SK-N-SH (cell line): ENCODE measurements at regions of chr16 and their contacts with region 1.

Region 1: DNA sequence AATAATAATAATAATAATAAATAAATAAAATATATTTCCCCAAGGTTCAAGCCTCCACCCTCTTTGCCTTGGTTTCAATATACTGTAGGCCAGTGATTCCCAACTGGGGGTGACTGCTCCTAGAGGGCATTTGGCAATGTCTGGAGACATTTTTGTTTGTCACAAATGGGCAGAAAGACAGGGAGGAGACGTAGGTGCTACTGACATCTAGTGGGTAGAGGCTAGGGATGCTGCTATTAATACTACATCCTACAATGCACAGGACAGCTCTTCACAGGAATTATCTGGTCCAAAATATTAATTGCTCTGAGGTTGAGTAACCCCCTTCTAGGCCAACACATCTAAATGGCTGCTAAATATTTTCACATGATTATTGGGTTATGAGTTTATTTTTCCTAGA is 12.8 kb upstream of the PRR14 start:
- DNase-seq: peak; percentile 45
- H3K4me3 ChIP-seq: no peak overlapping the region
- H3K27ac ChIP-seq: no peak overlapping the region
- H3K4me1 ChIP-seq: peaks cover 0 to 5% of the 10 kb centered on the region in 2 experiments; a peak in 1 of 4 replicates
- H3K27me3 ChIP-seq: no peaks in the 10 kb centered on the region
- CTCF ChIP-seq: peak; percentile 65
- EP300 ChIP-seq: no peak
- RAD21 ChIP-seq: peak; percentile 74

Region 2: GRCh38 chr16:30585400-30586189 is 52.3 kb before region 1 on chr16 and contains the start of gene ZNF785:
- CTCF ChIA-PET with region 1: no interaction called
- POLR2A ChIA-PET with region 1: no interaction called
- DNase-seq: peak; percentile 97
- H3K4me3 ChIP-seq: peak within 1 kb of the TSS; percentile 67 to 86
- H3K27ac ChIP-seq: peak within 1 kb of the TSS; percentile 87
- H3K4me1 ChIP-seq: peaks cover 0 to 4% of the 10 kb centered on the region in 2 experiments; a peak in 1 of 4 replicates
- H3K27me3 ChIP-seq: no peaks in the 10 kb centered on the region
- CTCF ChIP-seq: no peak; the same call in 1 of the 2 replicates
- EP300 ChIP-seq: peak in 1 of 2 experiments; percentile 16; a peak in 1 of 4 replicates
- RAD21 ChIP-seq: peak; percentile 36
- polyA plus RNA-seq, gene ZNF785: 8.8 and 10.6 TPM in 2 replicates

Region 3: DNA sequence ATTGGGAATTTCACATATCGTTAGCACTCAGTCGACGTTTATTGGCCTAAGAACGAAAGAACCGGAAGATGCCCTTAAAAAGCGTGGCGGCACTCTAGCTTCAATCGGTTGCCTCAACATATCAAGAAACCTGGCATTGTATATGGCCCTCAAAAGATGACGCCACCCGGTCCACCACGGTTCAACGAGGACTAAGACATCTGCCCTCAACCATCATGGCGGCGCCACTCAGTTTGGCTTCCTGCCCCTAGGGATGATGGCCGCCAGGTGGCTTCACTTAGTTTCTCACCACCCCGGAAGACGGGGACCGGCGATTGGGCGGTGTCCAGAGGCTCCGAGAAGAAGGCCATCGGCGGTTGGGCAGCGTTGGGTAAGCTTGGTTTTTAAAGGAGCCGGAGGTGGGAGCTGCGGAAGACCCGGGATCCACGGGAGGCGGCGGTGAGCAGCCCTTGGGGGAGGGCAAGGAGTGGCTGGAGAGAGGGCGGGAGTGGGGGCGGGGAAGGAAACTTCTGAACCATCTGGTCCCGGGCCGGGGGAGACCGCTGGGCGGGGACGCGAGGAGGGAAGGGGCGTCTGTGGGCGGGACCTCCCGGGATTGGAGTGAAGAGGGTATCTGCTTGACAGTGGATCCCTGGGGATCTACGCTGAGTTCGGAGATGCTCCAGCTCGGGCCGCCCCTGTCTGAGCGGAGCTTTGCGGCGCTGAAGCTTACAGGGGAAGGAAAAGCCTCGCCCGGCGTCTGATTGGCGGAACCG is 12.6 kb after region 1 on chr16 and contains the start of gene PRR14:
- CTCF ChIA-PET with region 1: interaction called, 12 read pairs
- POLR2A ChIA-PET with region 1: interaction called, 5 read pairs
- DNase-seq: peak; percentile 94
- H3K4me3 ChIP-seq: peak within 1 kb of the TSS; percentile 91 to 99
- H3K27ac ChIP-seq: peak within 1 kb of the TSS; percentile 88 to 95
- H3K4me1 ChIP-seq: peaks cover 7 to 16% of the 10 kb centered on the region in 2 experiments
- H3K27me3 ChIP-seq: no peaks in the 10 kb centered on the region
- CTCF ChIP-seq: no peak
- EP300 ChIP-seq: no peak; a peak in 1 of 4 replicates
- RAD21 ChIP-seq: no peak
- polyA plus RNA-seq, gene PRR14: 7.5 and 13.5 TPM in 2 replicates